ENCODE measurements at regions of chr21 and their contacts with region 1.

Region 1: GRCh38 chr21:27590271-27590670 is 623.4 kb upstream of the ADAMTS5 start:
- DNase-seq: peak; percentile 14 to 36
- ATAC-seq: peak in 7 of 8 donors; percentile 66 to 94 (median 76)
- H3K4me3 ChIP-seq: no peak overlapping the region
- H3K27ac ChIP-seq: peak overlapping the region in 2 of 10 donors; percentile 4 to 45
- H3K4me1 ChIP-seq: peaks cover 0 to 9% (median 0%) of the 10 kb centered on the region in 9 donors
- H3K27me3 ChIP-seq: no peaks in the 10 kb centered on the region
- CTCF ChIP-seq: no peak

Region 2: GRCh38 chr21:26743524-26743923 is 846.7 kb before region 1 on chr21:
- intact Hi-C with region 1: loop called in 1 of 10 experiments (anchors 5 kb)
- DNase-seq: no peak
- ATAC-seq: no peak
- H3K4me3 ChIP-seq: no peak overlapping the region
- H3K27ac ChIP-seq: no peak overlapping the region
- H3K4me1 ChIP-seq: no peaks in the 10 kb centered on the region
- H3K27me3 ChIP-seq: no peaks in the 10 kb centered on the region
- CTCF ChIP-seq: no peak

Region 3: DNA sequence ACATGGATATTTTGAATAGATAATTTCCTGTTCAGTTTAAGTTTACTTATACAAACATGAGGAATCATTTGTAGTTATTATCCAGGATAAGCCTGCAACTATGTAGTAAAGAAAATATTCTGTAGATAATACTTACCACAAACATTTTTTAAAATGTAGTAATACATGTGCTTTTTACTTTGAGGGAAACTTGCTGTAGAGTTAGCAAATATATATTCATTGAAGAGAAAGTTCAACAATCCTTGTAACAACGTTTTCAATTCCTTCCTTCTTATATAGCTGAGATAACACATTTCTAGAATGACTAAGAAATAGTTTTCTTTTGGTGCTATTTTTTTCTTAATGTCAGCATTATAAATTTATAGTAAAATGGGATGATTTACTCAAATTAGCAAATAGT is 41.2 kb after region 1 on chr21:
- intact Hi-C with region 1: loop called in 1 of 10 experiments (anchors 5 kb)
- DNase-seq: no peak
- ATAC-seq: no peak
- H3K4me3 ChIP-seq: no peak overlapping the region
- H3K27ac ChIP-seq: no peak overlapping the region
- H3K4me1 ChIP-seq: no peaks in the 10 kb centered on the region
- H3K27me3 ChIP-seq: no peaks in the 10 kb centered on the region
- CTCF ChIP-seq: no peak